HCT116 (cell line): ENCODE measurements at regions of chr12 and their contacts with region 1.

Region 1: DNA sequence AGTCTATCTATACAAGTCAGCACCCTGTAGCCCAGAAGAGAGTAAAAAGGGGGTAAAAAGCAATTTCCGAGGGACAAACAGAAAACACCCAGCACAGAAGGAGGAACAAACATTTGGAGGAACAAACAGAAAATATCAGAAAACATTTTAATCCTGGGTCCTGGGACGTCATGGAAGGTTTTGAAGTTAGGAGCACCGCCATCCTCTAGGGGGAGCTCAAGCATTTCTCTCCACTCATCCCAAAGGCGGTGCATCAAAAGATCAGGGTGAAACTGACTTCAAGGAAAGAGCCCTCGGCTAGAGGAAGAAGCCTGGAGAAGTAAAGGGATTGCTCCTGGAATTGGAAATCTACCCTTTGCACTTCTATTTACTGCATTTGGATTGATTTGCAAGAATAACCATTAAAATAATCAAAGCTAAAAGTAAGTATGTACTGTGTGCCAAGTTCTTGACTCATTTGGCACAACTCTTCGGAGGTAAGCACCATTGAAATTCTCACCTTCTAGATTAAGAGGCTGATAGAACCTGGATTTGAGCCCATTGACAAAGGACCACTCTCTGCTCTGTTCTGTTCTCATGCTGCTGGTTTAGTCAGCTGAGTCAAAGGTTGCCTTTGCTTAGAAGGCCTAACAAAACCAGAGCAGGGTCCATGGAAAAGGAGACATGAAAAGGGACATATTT is 17.2 kb upstream of the POC1B start:
- DNase-seq: peak; percentile 77
- ATAC-seq: peak; percentile 90
- H3K4me3 ChIP-seq: no peak overlapping the region
- H3K27ac ChIP-seq: no peak overlapping the region
- H3K4me1 ChIP-seq: peaks cover 0 to 4% of the 10 kb centered on the region in 2 experiments; a peak in 1 of 4 replicates
- H3K27me3 ChIP-seq: no peaks in the 10 kb centered on the region
- CTCF ChIP-seq: peak; percentile 74 to 92 (median 88)
- POLR2A ChIP-seq: no peak
- RAD21 ChIP-seq: peak; percentile 98

Region 2: GRCh38 chr12:90013409-90013808 is 470.4 kb after region 1 on chr12:
- CTCF ChIA-PET with region 1: interaction called, 3 read pairs
- POLR2A ChIA-PET with region 1: no interaction called
- RAD21 ChIA-PET with region 1: no interaction called
- intact Hi-C with region 1: loop called (anchors 1 kb)
- DNase-seq: no peak
- ATAC-seq: no peak
- H3K4me3 ChIP-seq: no peak overlapping the region
- H3K27ac ChIP-seq: no peak overlapping the region
- H3K4me1 ChIP-seq: no peaks in the 10 kb centered on the region
- H3K27me3 ChIP-seq: no peaks in the 10 kb centered on the region
- CTCF ChIP-seq: peak; percentile 6 to 12 (median 8); a peak in 1 of 6 replicates
- POLR2A ChIP-seq: no peak
- RAD21 ChIP-seq: peak; percentile 40; the same call in 1 of the 2 replicates

Region 3: GRCh38 chr12:90174198-90174510 is 631.1 kb after region 1 on chr12:
- CTCF ChIA-PET with region 1: no interaction called
- POLR2A ChIA-PET with region 1: no interaction called
- RAD21 ChIA-PET with region 1: no interaction called
- intact Hi-C with region 1: loop called (anchors 10 kb)
- DNase-seq: peak; percentile 6
- ATAC-seq: no peak; the same call in 1 of the 2 replicates
- H3K4me3 ChIP-seq: no peak overlapping the region
- H3K27ac ChIP-seq: no peak overlapping the region
- H3K4me1 ChIP-seq: peaks cover 0 to 8% of the 10 kb centered on the region in 2 experiments; a peak in 2 of 4 replicates
- H3K27me3 ChIP-seq: no peaks in the 10 kb centered on the region
- CTCF ChIP-seq: no peak
- POLR2A ChIP-seq: no peak
- RAD21 ChIP-seq: no peak

Region 4: GRCh38 chr12:90235642-90236041 is 692.6 kb after region 1 on chr12:
- CTCF ChIA-PET with region 1: no interaction called
- POLR2A ChIA-PET with region 1: no interaction called
- RAD21 ChIA-PET with region 1: no interaction called
- intact Hi-C with region 1: no loop called
- DNase-seq: no peak
- ATAC-seq: no peak
- H3K4me3 ChIP-seq: no peak overlapping the region
- H3K27ac ChIP-seq: no peak overlapping the region
- H3K4me1 ChIP-seq: no peaks in the 10 kb centered on the region
- H3K27me3 ChIP-seq: no peaks in the 10 kb centered on the region
- CTCF ChIP-seq: no peak
- POLR2A ChIP-seq: no peak
- RAD21 ChIP-seq: no peak

Region 5: DNA sequence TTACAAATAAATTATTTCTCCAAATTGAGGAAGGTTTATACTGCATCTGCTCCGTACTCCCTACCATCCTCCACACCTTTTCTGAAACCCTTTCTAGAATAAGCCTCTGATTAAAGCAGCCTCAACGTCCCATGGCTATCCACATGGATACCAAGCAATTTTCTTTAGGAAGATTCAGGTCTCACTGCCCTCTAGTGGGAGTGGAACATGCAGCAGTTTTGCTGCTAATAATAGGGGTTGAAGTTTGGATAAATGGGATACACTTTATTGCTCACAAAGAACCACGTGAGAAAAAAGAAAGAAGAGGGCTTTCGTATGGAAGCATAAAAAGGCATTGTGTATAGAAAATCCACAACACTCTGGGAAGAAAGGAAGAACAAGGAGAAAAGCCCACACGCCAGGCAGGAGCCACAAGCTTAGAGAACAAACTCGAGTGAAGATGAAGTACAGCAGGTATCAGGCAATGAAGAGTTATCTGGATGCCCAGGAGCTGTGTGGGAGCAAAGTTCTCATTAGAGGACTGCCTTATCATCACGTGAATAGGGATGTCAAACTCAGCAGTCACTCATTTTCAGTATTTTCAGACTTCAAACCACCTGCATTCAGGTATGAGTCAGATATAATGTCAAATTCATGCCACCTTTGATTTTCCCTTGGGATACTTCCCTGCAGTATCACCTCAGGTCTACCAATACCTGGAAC is 1366.2 kb after region 1 on chr12:
- CTCF ChIA-PET with region 1: no interaction called
- POLR2A ChIA-PET with region 1: no interaction called
- RAD21 ChIA-PET with region 1: no interaction called
- intact Hi-C with region 1: loop called (anchors 2 kb)
- DNase-seq: peak; percentile 38
- ATAC-seq: peak; percentile 91
- H3K4me3 ChIP-seq: no peak overlapping the region
- H3K27ac ChIP-seq: no peak overlapping the region
- H3K4me1 ChIP-seq: no peaks in the 10 kb centered on the region
- H3K27me3 ChIP-seq: no peaks in the 10 kb centered on the region
- CTCF ChIP-seq: peak; percentile 50 to 86 (median 78); a peak in 5 of 6 replicates
- POLR2A ChIP-seq: no peak
- RAD21 ChIP-seq: peak; percentile 72